ENCODE measurements at regions of chr2 and their contacts with region 1.

Region 1: GRCh38 chr2:231563378-231563961 is 29.2 kb upstream of the TEX44 start:
- DNase-seq: peak; percentile 29 to 58 (median 46)
- H3K4me3 ChIP-seq: no peak overlapping the region
- H3K27ac ChIP-seq: no peak overlapping the region
- H3K4me1 ChIP-seq: no peaks in the 10 kb centered on the region
- H3K27me3 ChIP-seq: no peaks in the 10 kb centered on the region
- CTCF ChIP-seq: peak in 1 of 3 donors; percentile 27
- EP300 ChIP-seq: no peak
- POLR2A ChIP-seq: no peak

Region 2: GRCh38 chr2:231597014-231597611 is 33.6 kb after region 1 on chr2:
- intact Hi-C with region 1: loop called in 2 of 4 experiments (anchors 5 kb)
- DNase-seq: peak in 3 of 5 donors; percentile 51 to 59 (median 55)
- H3K4me3 ChIP-seq: no peak overlapping the region
- H3K27ac ChIP-seq: no peak overlapping the region
- H3K4me1 ChIP-seq: peaks cover 7% of the 10 kb centered on the region
- H3K27me3 ChIP-seq: no peaks in the 10 kb centered on the region
- CTCF ChIP-seq: no peak
- EP300 ChIP-seq: no peak
- POLR2A ChIP-seq: no peak